ENCODE measurements at regions of chr20 and their contacts with region 1.

Region 1: GRCh38 chr20:10511509-10512251 is 76.6 kb downstream of the SLX4IP start:
- DNase-seq: peak; percentile 76 to 95
- H3K4me3 ChIP-seq: no peak overlapping the region
- H3K27ac ChIP-seq: peak overlapping the region; percentile 66 to 77
- H3K4me1 ChIP-seq: peaks cover 16 to 35% of the 10 kb centered on the region in 2 donors
- H3K27me3 ChIP-seq: no peaks in the 10 kb centered on the region
- CTCF ChIP-seq: no peak

Region 2: DNA sequence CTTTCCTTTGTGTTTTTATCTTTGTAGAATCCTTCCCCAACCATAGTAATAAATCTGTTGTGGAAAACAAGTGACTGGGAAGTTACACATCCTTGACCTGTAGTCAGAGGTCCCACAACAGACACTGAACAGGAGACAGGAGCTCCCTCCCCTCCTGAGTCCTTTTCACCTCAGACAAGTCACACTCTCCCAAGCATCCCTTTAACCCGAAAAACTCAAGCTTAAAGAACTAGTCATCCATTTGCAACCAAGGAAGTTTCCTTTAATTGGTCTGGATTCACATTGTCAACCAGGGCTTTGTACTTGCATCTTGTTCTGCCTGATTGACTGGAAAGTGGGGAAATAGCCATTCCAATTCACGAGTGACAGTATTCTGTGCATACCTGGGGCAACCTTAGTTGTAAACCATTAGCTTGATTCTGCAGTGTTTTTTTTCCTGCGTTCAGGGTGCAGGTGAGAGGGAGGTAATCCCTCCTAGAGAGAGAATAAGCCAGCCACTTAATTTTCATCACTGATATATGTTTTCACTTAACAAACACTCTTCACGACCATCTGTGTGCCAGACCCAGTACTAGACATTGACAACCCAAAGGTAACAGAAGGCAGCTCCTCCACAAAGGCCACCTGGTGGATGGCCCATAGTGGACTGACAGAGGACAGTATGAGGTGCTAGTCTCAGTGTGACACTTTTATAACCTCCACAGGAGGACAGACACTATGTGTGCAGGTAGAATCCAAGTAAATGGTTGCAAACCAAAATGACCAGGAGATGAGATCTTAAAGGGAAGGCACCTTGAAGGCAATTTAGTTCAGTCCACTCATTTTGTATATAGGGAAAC is 35.8 kb after region 1 on chr20:
- intact Hi-C with region 1: loop called (anchors 5 kb)
- DNase-seq: no peak
- H3K4me3 ChIP-seq: no peak overlapping the region
- H3K27ac ChIP-seq: no peak overlapping the region
- H3K4me1 ChIP-seq: peaks cover 0 to 16% of the 10 kb centered on the region in 2 donors
- H3K27me3 ChIP-seq: no peaks in the 10 kb centered on the region
- CTCF ChIP-seq: no peak